Activated naive CD4-positive, alpha-beta T cell treated with anti-CD3 and anti-CD28 coated beads for 36 hours (primary cell): ENCODE measurements at regions of chr14 and their contacts with region 1.

Region 1: DNA sequence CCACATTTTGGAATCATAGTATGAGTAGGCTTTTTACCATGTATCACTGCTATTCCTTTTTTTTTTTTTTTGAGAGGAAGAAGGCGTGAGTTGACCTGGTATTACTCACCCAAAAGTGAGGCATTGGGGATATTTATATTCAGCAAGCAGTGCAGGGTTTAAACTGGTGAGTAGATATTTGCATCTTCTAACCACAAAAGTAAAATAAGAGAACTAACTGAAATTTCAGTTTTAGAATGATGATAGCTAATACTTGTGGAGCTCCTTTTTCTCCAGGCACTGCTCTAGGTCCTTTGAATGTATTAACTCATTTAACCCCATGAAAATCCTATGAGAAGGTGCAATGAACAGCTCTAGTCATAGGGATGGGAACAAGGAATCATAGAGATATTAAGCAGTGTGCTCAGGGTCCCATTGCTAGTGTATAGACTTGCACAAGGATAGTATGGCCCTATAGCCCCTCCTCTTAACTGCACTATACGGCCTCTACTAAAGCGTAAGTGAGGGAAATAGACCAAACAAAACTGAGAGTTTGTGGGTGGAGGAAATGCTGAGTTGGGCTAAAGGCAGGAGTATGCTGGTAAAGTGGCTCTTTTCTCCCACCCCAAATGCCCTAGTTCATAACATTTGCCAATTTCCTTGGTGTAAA is 104.3 kb upstream of the MAX start:
- DNase-seq: peak; percentile 29
- H3K4me3 Mint-ChIP-seq: peak overlapping the region; percentile 6
- H3K27ac Mint-ChIP-seq: peak overlapping the region; percentile 71
- H3K4me1 Mint-ChIP-seq: peaks cover 62% of the 10 kb centered on the region
- H3K27me3 Mint-ChIP-seq: peaks cover 3% of the 10 kb centered on the region

Region 2: DNA sequence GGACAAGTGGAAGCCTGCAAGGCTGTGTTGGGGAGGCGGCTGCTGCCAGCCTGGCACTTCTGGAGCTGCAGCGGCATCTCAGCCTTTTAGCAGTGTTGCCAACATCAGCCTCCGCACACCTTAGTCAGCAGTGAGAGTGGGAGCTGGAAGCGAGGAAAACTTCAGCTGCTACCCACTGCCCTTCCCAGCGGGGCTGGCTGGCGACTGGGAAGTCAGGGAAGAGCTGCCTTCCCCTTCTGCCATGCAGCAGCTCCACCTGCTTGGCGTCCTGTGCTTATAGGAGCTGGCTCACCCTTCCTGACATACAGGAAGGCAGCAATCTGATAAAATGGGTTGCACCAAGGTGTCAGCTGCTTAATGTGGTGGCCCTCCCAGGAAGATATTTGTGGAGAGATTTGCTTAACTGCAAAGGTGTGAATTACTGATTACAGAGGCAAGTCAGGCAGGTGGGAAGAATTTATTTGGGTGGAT is 517.7 kb before region 1 on chr14:
- CTCF ChIA-PET with region 1: no interaction called
- intact Hi-C with region 1: no loop called
- DNase-seq: no peak
- H3K4me3 Mint-ChIP-seq: no peak overlapping the region
- H3K27ac Mint-ChIP-seq: no peak overlapping the region
- H3K4me1 Mint-ChIP-seq: no peaks in the 10 kb centered on the region
- H3K27me3 Mint-ChIP-seq: no peaks in the 10 kb centered on the region

Region 3: GRCh38 chr14:65170768-65171507 is 35.6 kb before region 1 on chr14:
- CTCF ChIA-PET with region 1: interaction called, 3 read pairs
- intact Hi-C with region 1: loop called (anchors 1 kb)
- DNase-seq: peak; percentile 78
- H3K4me3 Mint-ChIP-seq: peak overlapping the region; percentile 67
- H3K27ac Mint-ChIP-seq: no peak overlapping the region
- H3K4me1 Mint-ChIP-seq: peaks cover 15% of the 10 kb centered on the region
- H3K27me3 Mint-ChIP-seq: peaks cover 4% of the 10 kb centered on the region

Region 4: GRCh38 chr14:65287264-65288131 is 80.9 kb after region 1 on chr14:
- CTCF ChIA-PET with region 1: no interaction called
- intact Hi-C with region 1: loop called (anchors 2 kb)
- DNase-seq: peak; percentile 66
- H3K4me3 Mint-ChIP-seq: peak overlapping the region; percentile 74
- H3K27ac Mint-ChIP-seq: peak overlapping the region; percentile 98
- H3K4me1 Mint-ChIP-seq: peaks cover 64% of the 10 kb centered on the region
- H3K27me3 Mint-ChIP-seq: no peaks in the 10 kb centered on the region

Region 5: GRCh38 chr14:65336191-65336591 is 129.6 kb after region 1 on chr14:
- CTCF ChIA-PET with region 1: no interaction called
- intact Hi-C with region 1: loop called (anchors 1 kb)
- DNase-seq: peak; percentile 77
- H3K4me3 Mint-ChIP-seq: peak overlapping the region; percentile 72
- H3K27ac Mint-ChIP-seq: peak overlapping the region; percentile 93
- H3K4me1 Mint-ChIP-seq: peaks cover 55% of the 10 kb centered on the region
- H3K27me3 Mint-ChIP-seq: no peaks in the 10 kb centered on the region

Region 6: GRCh38 chr14:65478596-65478995 is 272.0 kb after region 1 on chr14:
- CTCF ChIA-PET with region 1: no interaction called
- intact Hi-C with region 1: loop called (anchors 5 kb)
- DNase-seq: peak; percentile 13
- H3K4me3 Mint-ChIP-seq: no peak overlapping the region
- H3K27ac Mint-ChIP-seq: no peak overlapping the region
- H3K4me1 Mint-ChIP-seq: peaks cover 61% of the 10 kb centered on the region
- H3K27me3 Mint-ChIP-seq: no peaks in the 10 kb centered on the region

Region 7: GRCh38 chr14:65847075-65847847 is 640.7 kb after region 1 on chr14:
- CTCF ChIA-PET with region 1: interaction called, 4 read pairs
- intact Hi-C with region 1: loop called (anchors 1 kb)
- DNase-seq: peak; percentile 83
- H3K4me3 Mint-ChIP-seq: no peak overlapping the region
- H3K27ac Mint-ChIP-seq: peak overlapping the region; percentile 71
- H3K4me1 Mint-ChIP-seq: peaks cover 62% of the 10 kb centered on the region
- H3K27me3 Mint-ChIP-seq: no peaks in the 10 kb centered on the region

Region 8: GRCh38 chr14:65949711-65950516 is 743.3 kb after region 1 on chr14:
- CTCF ChIA-PET with region 1: no interaction called
- intact Hi-C with region 1: loop called (anchors 5 kb)
- DNase-seq: peak; percentile 59
- H3K4me3 Mint-ChIP-seq: no peak overlapping the region
- H3K27ac Mint-ChIP-seq: peak overlapping the region; percentile 37
- H3K4me1 Mint-ChIP-seq: peaks cover 28% of the 10 kb centered on the region
- H3K27me3 Mint-ChIP-seq: peaks cover 5% of the 10 kb centered on the region